ENCODE measurements at regions of chr1 and their contacts with region 1.

Region 1: DNA sequence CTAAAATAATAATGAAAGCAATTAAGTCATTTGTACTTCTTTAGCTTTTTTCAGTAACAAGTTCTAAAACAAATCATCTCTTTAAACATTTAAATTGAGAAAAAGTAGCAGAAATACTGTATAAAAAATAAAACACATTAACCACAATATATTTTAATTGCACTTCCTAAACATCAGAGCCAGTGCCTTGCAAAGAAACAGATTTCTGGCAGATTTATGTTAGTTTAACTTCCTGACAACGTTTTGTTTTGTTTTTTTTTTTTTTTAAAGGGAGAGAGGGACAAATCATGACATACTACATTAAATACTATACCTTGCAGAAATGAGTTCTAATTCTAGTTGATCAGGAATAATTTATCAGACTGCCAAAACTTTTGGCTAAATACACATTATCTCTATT is 11.2 kb downstream of the TMEM59 start:
- DNase-seq: no peak
- H3K4me3 Mint-ChIP-seq: no peak overlapping the region
- H3K27ac Mint-ChIP-seq: no peak overlapping the region
- H3K4me1 Mint-ChIP-seq: peaks cover 4% of the 10 kb centered on the region
- H3K27me3 Mint-ChIP-seq: no peaks in the 10 kb centered on the region

Region 2: DNA sequence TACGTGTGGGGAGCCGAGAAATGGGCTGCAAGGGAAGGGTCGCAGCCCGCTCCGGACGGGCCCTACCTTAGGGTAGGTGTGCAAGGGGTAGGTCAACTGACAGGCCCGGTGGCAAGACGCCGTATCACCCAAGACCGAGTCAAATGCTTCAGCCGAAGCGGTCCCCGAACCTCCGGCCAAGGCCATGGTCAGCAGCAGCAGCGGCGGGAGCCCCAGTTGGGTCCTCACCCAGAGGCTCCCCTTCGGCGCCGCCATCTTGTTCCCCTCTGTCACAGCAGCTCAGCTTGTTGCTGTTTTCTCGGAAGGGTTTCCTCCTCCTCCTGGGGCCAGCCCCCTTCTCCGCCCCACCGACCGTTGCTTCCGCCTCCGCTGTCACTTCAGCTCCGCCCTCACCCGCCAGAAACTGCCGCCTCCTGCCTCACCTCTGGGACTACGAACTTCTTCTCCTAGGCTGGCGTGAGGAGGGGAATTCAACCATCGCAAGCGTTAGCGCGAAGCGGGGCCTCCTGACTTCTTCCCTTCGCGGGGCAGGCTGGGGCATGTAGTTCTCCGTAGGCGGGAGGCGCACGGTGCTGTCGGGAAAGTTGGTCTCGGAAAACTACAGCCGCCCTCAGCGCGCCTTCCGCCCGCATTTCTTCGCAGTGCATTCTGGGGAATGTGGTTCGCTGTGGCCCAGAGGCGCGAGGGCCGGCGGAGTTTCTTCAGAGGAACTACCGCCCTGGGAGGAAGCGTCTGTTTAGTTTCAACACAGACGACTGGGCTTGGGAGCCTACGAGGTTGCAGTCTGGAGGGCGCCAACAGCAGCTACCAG is 11.3 kb after region 1 on chr1 and contains the starts of genes TCEANC2 and TMEM59:
- CTCF ChIA-PET with region 1: interaction called, 4 read pairs
- POLR2A ChIA-PET with region 1: interaction called, 24 read pairs
- DNase-seq: peak; percentile 99
- H3K4me3 Mint-ChIP-seq: no peak within 1 kb of the TSS
- H3K27ac Mint-ChIP-seq: no peak within 1 kb of the TSS
- H3K4me1 Mint-ChIP-seq: peaks cover 37% of the 10 kb centered on the region
- H3K27me3 Mint-ChIP-seq: no peaks in the 10 kb centered on the region
- total RNA-seq, gene TCEANC2: 11.5 to 13.5 TPM
- total RNA-seq, gene TMEM59: 278 to 280 TPM